ENCODE measurements at regions of chr2 and their contacts with region 1.

Region 1: GRCh38 chr2:147910990-147911473 is 66.2 kb downstream of the ACVR2A start:
- DNase-seq: peak; percentile 69
- H3K4me3 Mint-ChIP-seq: no peak overlapping the region
- H3K27ac Mint-ChIP-seq: no peak overlapping the region
- H3K4me1 Mint-ChIP-seq: no peaks in the 10 kb centered on the region
- H3K27me3 Mint-ChIP-seq: no peaks in the 10 kb centered on the region
- CTCF ChIP-seq: peak; percentile 35

Region 2: GRCh38 chr2:146927080-146927711 is 983.8 kb before region 1 on chr2:
- CTCF ChIA-PET with region 1: interaction called, 5 read pairs
- POLR2A ChIA-PET with region 1: interaction called, 3 read pairs
- intact Hi-C with region 1: loop called (anchors 1 kb)
- DNase-seq: peak; percentile 71
- H3K4me3 Mint-ChIP-seq: no peak overlapping the region
- H3K27ac Mint-ChIP-seq: no peak overlapping the region
- H3K4me1 Mint-ChIP-seq: peaks cover 5% of the 10 kb centered on the region
- H3K27me3 Mint-ChIP-seq: no peaks in the 10 kb centered on the region
- CTCF ChIP-seq: peak; percentile 53

Region 3: DNA sequence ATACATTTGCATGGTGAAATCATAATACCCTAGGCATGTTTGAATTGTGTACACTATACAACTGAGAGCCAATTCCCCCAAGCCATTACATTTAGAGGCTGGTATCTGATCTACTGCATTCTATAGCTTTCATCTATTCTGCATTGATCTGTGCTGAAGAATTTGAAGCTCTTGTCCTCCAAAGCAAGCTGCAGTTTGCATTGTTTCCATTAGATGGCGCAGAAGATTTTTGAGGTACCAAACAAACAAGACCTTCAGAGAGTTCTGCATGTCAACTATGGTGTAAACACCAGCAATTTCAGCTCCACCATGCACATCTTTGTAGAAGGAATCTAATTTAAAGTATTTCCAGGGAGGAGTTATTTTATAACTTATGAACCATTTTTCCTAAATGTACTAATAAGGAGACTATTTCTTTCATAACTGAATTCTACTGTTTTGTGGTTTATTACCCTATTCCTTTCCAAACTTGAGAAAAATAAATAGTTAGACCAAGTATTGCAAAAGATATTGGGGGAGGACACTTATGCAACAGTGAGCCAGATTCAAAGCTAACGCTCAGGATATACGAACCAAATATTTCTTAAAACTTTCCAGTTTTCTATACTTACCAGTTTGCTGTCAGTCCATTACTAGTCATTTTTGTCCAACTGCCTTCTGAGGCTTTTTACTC is 828.0 kb before region 1 on chr2:
- CTCF ChIA-PET with region 1: interaction called, 34 read pairs
- POLR2A ChIA-PET with region 1: interaction called, 6 read pairs
- intact Hi-C with region 1: loop called (anchors 1 kb)
- DNase-seq: peak; percentile 75
- H3K4me3 Mint-ChIP-seq: no peak overlapping the region
- H3K27ac Mint-ChIP-seq: no peak overlapping the region
- H3K4me1 Mint-ChIP-seq: peaks cover 13% of the 10 kb centered on the region
- H3K27me3 Mint-ChIP-seq: no peaks in the 10 kb centered on the region
- CTCF ChIP-seq: peak; percentile 80

Region 4: DNA sequence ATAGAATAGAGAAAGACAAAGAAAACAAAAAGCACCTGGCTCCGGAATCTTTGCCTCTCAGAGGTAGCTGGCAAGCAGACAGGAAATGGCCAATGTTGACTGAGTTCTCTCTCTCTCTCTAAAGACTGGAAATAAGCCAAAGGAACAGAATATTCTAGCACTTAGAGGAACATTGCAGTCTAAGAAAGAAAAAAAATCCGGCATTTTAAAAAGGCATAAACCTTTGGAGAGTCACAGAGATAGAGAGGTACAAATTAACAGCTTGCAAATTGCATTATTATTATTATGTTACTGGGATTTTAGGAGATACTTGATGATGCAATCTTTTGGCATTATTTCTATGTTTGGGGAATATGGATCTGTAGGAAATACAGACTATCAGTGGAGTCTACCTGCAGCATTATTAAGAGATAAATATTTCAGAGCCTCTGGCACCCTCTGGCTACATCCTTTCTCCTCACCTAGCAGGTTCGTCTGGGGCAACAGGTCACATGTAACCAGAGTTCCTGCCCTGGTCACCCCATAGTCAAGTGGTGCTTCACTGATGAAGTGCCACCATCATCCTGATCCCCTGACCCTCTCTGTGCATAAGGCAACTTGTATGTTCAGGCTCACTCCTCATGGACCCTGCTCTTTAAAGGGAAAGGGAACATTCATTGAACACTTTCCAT is 385.1 kb before region 1 on chr2:
- CTCF ChIA-PET with region 1: no interaction called
- POLR2A ChIA-PET with region 1: interaction called, 6 read pairs
- intact Hi-C with region 1: loop called (anchors 5 kb)
- DNase-seq: peak; percentile 66
- H3K4me3 Mint-ChIP-seq: no peak overlapping the region
- H3K27ac Mint-ChIP-seq: peak overlapping the region; percentile 44
- H3K4me1 Mint-ChIP-seq: peaks cover 17% of the 10 kb centered on the region
- H3K27me3 Mint-ChIP-seq: no peaks in the 10 kb centered on the region
- CTCF ChIP-seq: no peak

Region 5: DNA sequence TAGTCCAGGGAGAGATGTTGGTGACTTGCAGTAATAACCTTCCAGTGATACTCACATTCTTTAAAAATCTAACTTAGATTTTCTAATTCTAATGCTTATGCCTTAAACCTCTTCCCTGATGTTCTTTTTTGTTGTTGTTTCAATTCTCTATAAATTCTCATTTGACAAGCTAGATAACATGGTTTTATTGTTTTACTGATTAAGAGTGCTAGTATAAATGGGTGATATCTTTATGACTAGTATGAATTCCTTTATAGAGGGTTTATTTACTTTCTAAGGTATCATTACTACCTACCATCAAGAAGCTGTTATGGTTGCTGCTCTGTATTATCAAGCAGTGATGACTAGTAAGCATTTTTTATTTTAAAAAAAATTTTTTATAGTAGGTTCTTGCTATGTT is 31.2 kb before region 1 on chr2:
- CTCF ChIA-PET with region 1: no interaction called
- POLR2A ChIA-PET with region 1: no interaction called
- intact Hi-C with region 1: no loop called
- DNase-seq: no peak
- H3K4me3 Mint-ChIP-seq: no peak overlapping the region
- H3K27ac Mint-ChIP-seq: no peak overlapping the region
- H3K4me1 Mint-ChIP-seq: peaks cover 4% of the 10 kb centered on the region
- H3K27me3 Mint-ChIP-seq: no peaks in the 10 kb centered on the region
- CTCF ChIP-seq: no peak

Measured in MCF 10A (cell line).